Mammary epithelial cell (primary cell): ENCODE measurements at regions of chr1 and their contacts with region 1.

Region 1: GRCh38 chr1:151098126-151098525 is 27.6 kb downstream of the GABPB2 start:
- DNase-seq: no peak
- H3K4me3 ChIP-seq: no peak overlapping the region
- H3K27ac ChIP-seq: no peak overlapping the region
- H3K4me1 ChIP-seq: peaks cover 2% of the 10 kb centered on the region
- H3K27me3 ChIP-seq: no peaks in the 10 kb centered on the region
- CTCF ChIP-seq: no peak

Region 2: GRCh38 chr1:151039521-151039920 is 58.6 kb before region 1 on chr1:
- CTCF ChIA-PET with region 1: no interaction called
- dilution Hi-C with region 1: no loop called
- in situ Hi-C with region 1: no loop called
- intact Hi-C with region 1: no loop called
- DNase-seq: no peak
- H3K4me3 ChIP-seq: no peak overlapping the region
- H3K27ac ChIP-seq: no peak overlapping the region
- H3K4me1 ChIP-seq: no peaks in the 10 kb centered on the region
- H3K27me3 ChIP-seq: no peaks in the 10 kb centered on the region
- CTCF ChIP-seq: no peak

Region 3: DNA sequence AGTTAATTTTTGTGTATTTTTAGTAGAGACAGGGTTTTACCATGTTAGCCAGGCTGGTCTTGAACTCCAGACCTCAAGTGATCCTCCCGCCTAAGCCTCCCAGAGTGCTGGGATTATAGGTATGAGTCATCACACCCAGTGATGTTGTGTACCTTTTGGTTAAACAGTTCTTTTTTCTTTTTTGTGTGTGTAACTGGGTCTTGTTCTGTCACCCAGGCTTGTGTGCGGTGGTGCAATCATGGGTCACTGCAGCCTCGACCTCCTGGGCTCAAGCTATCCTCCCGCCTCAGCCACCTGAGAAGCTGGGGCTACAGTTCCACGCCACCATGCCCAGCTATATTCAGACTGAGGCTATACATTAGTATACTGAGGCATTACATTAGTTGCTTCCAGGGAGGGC is 10.2 kb after region 1 on chr1:
- CTCF ChIA-PET with region 1: interaction called, 23 read pairs
- dilution Hi-C with region 1: no loop called
- in situ Hi-C with region 1: no loop called
- intact Hi-C with region 1: no loop called
- DNase-seq: no peak
- H3K4me3 ChIP-seq: no peak overlapping the region
- H3K27ac ChIP-seq: no peak overlapping the region
- H3K4me1 ChIP-seq: no peaks in the 10 kb centered on the region
- H3K27me3 ChIP-seq: no peaks in the 10 kb centered on the region
- CTCF ChIP-seq: no peak

Region 4: GRCh38 chr1:151273925-151274466 is 175.9 kb after region 1 on chr1:
- CTCF ChIA-PET with region 1: no interaction called
- dilution Hi-C with region 1: loop called (anchors 5 kb)
- in situ Hi-C with region 1: no loop called
- intact Hi-C with region 1: no loop called
- DNase-seq: no peak
- H3K4me3 ChIP-seq: no peak overlapping the region
- H3K27ac ChIP-seq: no peak overlapping the region
- H3K4me1 ChIP-seq: no peaks in the 10 kb centered on the region
- H3K27me3 ChIP-seq: no peaks in the 10 kb centered on the region
- CTCF ChIP-seq: no peak